HCT116 (cell line): ENCODE measurements at regions of chr5 and their contacts with region 1.

Region 1: DNA sequence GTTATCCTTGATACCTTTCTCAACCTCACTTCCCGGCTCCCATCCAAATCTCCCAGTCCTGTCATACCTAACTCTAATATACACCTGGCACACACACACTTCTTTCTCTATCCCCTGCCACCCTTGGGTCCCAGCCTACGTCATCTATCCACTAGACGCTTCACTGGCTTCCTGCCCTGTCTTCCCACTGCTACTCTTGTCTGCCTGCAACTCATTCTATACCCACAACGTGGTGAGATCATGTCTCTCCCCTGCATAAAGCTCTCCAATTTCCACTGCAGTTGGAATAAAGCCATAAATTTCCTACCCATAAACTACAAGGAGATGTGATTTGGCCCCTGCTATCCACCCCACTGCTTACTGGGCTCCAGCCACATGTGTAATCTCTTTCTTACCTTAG is 93.5 kb downstream of the JMY start:
- DNase-seq: no peak
- ATAC-seq: no peak
- H3K4me3 ChIP-seq: no peak overlapping the region
- H3K27ac ChIP-seq: no peak overlapping the region
- H3K4me1 ChIP-seq: no peaks in the 10 kb centered on the region
- H3K27me3 ChIP-seq: no peaks in the 10 kb centered on the region
- CTCF ChIP-seq: no peak
- POLR2A ChIP-seq: no peak
- RAD21 ChIP-seq: no peak

Region 2: GRCh38 chr5:79050498-79050897 is 279.0 kb before region 1 on chr5:
- CTCF ChIA-PET with region 1: no interaction called
- POLR2A ChIA-PET with region 1: no interaction called
- RAD21 ChIA-PET with region 1: no interaction called
- intact Hi-C with region 1: no loop called
- DNase-seq: no peak
- ATAC-seq: no peak
- H3K4me3 ChIP-seq: no peak overlapping the region
- H3K27ac ChIP-seq: no peak overlapping the region
- H3K4me1 ChIP-seq: no peaks in the 10 kb centered on the region
- H3K27me3 ChIP-seq: no peaks in the 10 kb centered on the region
- CTCF ChIP-seq: no peak
- POLR2A ChIP-seq: no peak
- RAD21 ChIP-seq: no peak

Region 3: GRCh38 chr5:79263290-79263689 is 66.2 kb before region 1 on chr5:
- CTCF ChIA-PET with region 1: no interaction called
- POLR2A ChIA-PET with region 1: no interaction called
- RAD21 ChIA-PET with region 1: no interaction called
- intact Hi-C with region 1: loop called (anchors 10 kb)
- DNase-seq: no peak
- ATAC-seq: no peak
- H3K4me3 ChIP-seq: no peak overlapping the region
- H3K27ac ChIP-seq: no peak overlapping the region
- H3K4me1 ChIP-seq: no peaks in the 10 kb centered on the region
- H3K27me3 ChIP-seq: no peaks in the 10 kb centered on the region
- CTCF ChIP-seq: no peak
- POLR2A ChIP-seq: no peak
- RAD21 ChIP-seq: no peak